ENCODE measurements at regions of chr11 and their contacts with region 1.

Region 1: DNA sequence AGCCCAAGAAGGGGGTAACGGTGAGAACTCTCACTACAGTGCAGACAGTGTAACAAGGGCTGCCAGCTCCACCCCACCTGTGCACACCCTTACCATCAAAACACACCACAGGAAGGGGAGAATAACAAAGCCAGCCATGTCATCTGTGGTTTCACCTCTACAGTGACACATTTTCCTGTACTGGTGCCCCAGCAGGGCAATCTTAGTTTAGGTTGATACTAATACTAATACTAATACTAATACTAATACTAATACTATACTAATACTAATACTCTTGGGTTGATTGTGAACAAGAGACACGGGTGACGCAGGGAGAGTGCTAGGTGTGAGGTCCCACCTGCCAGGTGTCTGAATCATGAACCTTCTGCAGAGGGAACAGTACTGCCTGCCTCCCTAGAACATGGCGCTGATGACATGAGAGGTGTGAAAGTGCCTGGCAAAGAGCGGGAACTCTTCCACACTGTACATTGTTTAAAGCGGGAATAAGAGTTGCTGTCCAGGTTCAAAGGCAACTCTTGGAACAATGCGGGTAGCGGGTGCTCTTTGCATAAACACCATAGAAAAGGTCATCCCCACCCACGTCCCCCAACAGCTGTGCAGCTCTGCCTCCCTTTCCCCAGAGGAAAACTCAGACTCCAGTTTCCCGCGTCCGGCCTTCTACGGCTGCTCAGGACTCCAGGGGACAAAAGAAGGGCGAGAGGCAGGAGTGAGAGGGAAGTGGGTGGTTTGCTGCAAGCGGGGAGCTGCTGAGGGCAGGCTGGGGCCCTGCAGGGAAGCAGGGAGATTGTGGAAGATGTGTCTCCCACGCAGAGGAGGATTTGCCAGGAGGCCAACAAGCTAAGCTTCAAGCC is 25.0 kb upstream of the TMPRSS4 start:
- DNase-seq: peak; percentile 87
- ATAC-seq: peak; percentile 82
- H3K4me3 Mint-ChIP-seq: peak overlapping the region; percentile 9
- H3K27ac Mint-ChIP-seq: peak overlapping the region; percentile 90
- H3K4me1 Mint-ChIP-seq: peaks cover 67% of the 10 kb centered on the region
- H3K27me3 Mint-ChIP-seq: peaks cover 3% of the 10 kb centered on the region

Region 2: DNA sequence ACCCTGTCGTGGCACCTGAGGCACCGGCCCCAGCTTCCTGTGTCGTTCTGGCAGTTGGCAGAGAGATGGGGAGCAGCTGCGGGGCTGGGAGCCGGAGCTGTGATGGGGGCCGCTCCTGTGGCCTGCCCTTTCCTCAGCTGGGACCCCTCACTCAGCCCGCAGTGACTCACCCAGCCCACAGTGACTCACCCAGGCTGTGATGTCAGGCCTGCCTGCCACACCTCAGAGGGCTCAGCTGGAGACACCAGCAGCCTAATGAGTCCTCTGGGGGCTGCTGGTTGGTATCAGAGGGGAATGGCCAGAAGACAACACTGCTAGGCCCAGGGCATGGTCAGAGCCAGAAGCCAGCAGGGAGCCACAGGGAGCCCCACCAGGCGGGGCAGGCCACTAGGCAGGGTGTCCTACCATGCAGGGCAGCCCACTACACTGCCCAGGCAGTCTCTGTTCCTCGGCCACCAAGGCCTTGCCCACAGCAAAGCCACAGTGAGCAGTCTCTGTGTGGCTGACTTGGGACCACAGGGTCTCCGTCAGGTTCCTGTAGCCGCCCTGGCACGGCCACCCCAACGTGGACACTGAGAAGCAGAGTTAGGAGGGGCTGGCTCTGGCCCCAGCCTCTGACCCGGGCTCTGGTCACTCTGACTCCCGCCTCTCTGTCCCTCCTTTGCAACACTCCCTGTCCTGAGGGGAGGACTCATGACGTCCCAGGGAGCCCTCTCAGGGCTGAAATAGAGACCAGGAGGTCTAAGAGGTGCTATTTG is 223.0 kb before region 1 on chr11:
- CTCF ChIA-PET with region 1: interaction called, 148 read pairs
- DNase-seq: peak; percentile 96
- ATAC-seq: peak; percentile 94
- H3K4me3 Mint-ChIP-seq: no peak overlapping the region
- H3K27ac Mint-ChIP-seq: peak overlapping the region; percentile 85
- H3K4me1 Mint-ChIP-seq: peaks cover 72% of the 10 kb centered on the region
- H3K27me3 Mint-ChIP-seq: no peaks in the 10 kb centered on the region

Region 3: GRCh38 chr11:117932067-117932370 is 119.8 kb before region 1 on chr11:
- CTCF ChIA-PET with region 1: interaction called, 13 read pairs
- DNase-seq: peak; percentile 71
- ATAC-seq: no peak
- H3K4me3 Mint-ChIP-seq: no peak overlapping the region
- H3K27ac Mint-ChIP-seq: peak overlapping the region; percentile 95
- H3K4me1 Mint-ChIP-seq: peaks cover 81% of the 10 kb centered on the region
- H3K27me3 Mint-ChIP-seq: peaks cover 7% of the 10 kb centered on the region

Region 4: DNA sequence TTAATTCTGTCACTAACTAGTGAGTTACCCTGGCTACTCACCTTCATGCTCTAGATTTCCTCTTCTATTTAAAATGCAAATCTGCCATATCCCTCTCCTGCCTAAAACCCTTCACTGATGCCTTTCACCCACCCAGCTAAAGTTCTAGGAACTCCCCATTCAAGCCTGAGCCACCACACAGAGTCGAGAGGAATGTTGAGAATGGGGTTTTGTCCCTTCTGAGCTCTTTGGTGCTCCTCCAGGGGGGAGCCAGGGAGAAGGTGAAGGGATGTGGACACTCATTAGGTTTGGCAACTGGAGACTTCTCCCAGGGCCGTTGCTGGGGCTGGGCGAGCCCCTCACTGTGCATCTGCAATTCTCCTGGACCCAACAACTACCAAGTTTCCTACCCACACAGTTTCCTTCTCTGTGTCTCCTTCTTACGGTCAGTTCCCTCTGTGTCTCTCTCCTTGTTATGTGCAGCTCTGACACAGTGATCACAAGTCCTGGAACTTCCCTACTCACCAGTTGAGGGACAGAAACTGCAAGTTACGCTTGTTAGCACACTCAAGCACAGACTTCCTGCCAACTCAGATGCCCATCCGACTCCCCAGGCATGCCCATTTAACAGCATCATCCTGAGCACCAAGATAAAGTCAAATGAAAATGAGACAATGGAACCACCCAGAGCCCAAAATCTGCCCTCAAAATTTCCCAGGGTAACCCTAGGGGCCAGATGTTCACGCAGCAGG is 72.2 kb before region 1 on chr11:
- CTCF ChIA-PET with region 1: interaction called, 346 read pairs
- DNase-seq: no peak
- ATAC-seq: peak; percentile 37
- H3K4me3 Mint-ChIP-seq: no peak overlapping the region
- H3K27ac Mint-ChIP-seq: peak overlapping the region; percentile 74
- H3K4me1 Mint-ChIP-seq: peaks cover 80% of the 10 kb centered on the region
- H3K27me3 Mint-ChIP-seq: no peaks in the 10 kb centered on the region

Region 5: GRCh38 chr11:118015385-118015841 is 36.4 kb before region 1 on chr11:
- CTCF ChIA-PET with region 1: interaction called, 22 read pairs
- DNase-seq: peak; percentile 77
- ATAC-seq: peak; percentile 59
- H3K4me3 Mint-ChIP-seq: peak overlapping the region; percentile 46
- H3K27ac Mint-ChIP-seq: peak overlapping the region; percentile 92
- H3K4me1 Mint-ChIP-seq: peaks cover 74% of the 10 kb centered on the region
- H3K27me3 Mint-ChIP-seq: no peaks in the 10 kb centered on the region

Region 6: GRCh38 chr11:118092907-118093571 is 41.2 kb after region 1 on chr11:
- CTCF ChIA-PET with region 1: no interaction called
- DNase-seq: no peak
- ATAC-seq: no peak
- H3K4me3 Mint-ChIP-seq: no peak overlapping the region
- H3K27ac Mint-ChIP-seq: no peak overlapping the region
- H3K4me1 Mint-ChIP-seq: no peaks in the 10 kb centered on the region
- H3K27me3 Mint-ChIP-seq: peaks cover 28% of the 10 kb centered on the region

Region 7: DNA sequence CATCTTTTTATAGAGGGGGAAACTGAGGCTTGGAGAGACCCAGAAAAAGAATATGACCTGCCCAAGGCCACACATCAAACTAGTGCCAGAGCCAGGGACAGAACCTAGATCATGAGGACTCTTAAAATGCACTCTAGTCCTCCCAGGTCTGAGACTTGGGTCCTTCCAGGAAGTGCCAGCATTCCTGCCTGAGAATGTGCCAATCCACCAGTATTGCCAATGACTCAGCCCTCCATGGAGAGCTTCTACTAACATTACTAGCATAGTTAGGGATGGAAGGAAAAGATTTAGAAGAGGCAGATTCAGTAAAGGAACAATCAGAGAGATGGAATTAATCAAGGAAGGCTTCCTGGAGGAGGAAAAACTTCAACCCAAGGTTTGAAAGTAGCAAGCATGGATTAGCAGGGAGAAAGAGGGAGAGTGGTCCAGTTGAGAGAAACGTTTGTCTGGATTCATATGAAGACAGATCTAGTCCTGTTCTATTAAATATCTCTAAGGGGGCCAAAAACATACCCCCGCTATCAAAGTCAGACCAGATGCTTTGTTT is 55.0 kb after region 1 on chr11:
- CTCF ChIA-PET with region 1: no interaction called
- DNase-seq: no peak
- ATAC-seq: no peak
- H3K4me3 Mint-ChIP-seq: no peak overlapping the region
- H3K27ac Mint-ChIP-seq: no peak overlapping the region
- H3K4me1 Mint-ChIP-seq: peaks cover 5% of the 10 kb centered on the region
- H3K27me3 Mint-ChIP-seq: peaks cover 3% of the 10 kb centered on the region

Region 8: DNA sequence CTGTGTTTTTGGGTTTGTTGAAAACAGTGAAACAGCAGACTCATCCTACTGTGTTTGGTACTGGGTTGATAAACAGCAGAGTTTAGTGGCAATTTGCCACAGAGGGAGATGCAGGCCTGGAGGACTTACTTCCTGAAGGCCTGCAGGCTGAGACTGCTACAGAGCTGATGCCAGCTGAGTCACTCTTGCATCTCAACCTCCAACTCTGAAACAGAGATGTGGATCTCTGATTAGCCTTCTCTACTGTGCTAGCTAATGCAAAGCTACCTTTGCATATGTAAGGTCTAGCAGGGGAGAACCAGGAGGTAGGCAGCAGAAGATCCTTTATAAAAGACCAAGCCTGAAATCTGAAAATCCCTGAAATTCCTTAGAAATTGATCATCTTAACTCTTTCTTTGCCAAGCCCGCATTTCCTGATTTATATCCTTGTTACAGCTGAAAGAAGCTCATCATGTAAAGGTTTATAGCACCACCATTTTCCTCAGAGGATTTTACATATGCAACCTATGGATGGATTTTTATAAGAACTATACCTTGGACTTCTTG is 364.0 kb after region 1 on chr11:
- CTCF ChIA-PET with region 1: no interaction called
- DNase-seq: peak; percentile 75
- ATAC-seq: peak; percentile 94
- H3K4me3 Mint-ChIP-seq: no peak overlapping the region
- H3K27ac Mint-ChIP-seq: no peak overlapping the region
- H3K4me1 Mint-ChIP-seq: peaks cover 4% of the 10 kb centered on the region
- H3K27me3 Mint-ChIP-seq: no peaks in the 10 kb centered on the region

Region 9: GRCh38 chr11:118581057-118581456 is 529.2 kb after region 1 on chr11:
- CTCF ChIA-PET with region 1: no interaction called
- DNase-seq: no peak
- ATAC-seq: no peak
- H3K4me3 Mint-ChIP-seq: no peak overlapping the region
- H3K27ac Mint-ChIP-seq: no peak overlapping the region
- H3K4me1 Mint-ChIP-seq: peaks cover 13% of the 10 kb centered on the region
- H3K27me3 Mint-ChIP-seq: no peaks in the 10 kb centered on the region

Measured in activated CD8-positive, alpha-beta memory T cell treated with anti-CD3 and anti-CD28 coated beads, Interleukin-2, amount 10 ng/mL, durations not matched to agents 7 days and 5 days (primary cell).